Head of caudate nucleus (tissue), 42 donors: ENCODE measurements at regions of chr1 and their contacts with region 1.

Region 1: DNA sequence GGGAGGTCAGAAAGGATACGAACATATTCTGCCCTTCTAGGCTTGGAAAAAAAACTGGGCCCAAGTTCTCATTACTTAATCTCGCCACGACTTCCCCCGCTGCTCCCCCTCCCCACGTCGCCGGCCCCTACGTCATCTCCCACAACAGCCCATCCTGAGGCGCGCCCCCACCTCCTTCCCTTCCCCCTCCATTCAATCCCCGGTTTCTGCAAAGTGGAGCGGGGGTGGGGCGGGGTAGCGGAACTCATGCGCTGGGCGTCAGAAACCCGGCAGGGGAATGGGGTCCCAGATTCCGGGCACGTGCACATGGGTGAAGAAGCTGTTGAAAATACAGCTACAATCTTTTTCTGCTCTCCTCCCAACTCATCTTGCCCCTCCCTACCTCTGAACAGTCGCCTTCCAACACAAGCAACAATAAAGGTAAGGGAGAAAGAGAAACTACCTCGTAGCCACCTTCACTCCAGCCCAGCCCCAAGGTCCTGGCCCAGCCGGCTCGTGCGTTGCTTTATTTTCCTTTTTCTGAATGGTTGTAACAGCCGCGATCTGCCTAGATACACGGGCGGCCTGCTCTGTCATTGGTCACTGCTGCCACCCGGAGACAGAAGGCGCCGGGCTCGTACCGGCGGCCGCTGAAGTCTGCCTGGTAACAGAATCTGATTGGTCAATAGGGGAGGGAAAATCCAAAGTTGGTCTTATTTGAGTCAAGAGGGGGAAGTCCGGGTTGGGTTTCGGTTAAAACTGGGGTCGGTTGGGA is at the start of gene RFX5:
- DNase-seq: peak; percentile 85 to 98 (median 94)

Region 2: GRCh38 chr1:150683914-150684313 is 663.0 kb before region 1 on chr1:
- intact Hi-C with region 1: no loop called
- DNase-seq: no peak

Region 3: DNA sequence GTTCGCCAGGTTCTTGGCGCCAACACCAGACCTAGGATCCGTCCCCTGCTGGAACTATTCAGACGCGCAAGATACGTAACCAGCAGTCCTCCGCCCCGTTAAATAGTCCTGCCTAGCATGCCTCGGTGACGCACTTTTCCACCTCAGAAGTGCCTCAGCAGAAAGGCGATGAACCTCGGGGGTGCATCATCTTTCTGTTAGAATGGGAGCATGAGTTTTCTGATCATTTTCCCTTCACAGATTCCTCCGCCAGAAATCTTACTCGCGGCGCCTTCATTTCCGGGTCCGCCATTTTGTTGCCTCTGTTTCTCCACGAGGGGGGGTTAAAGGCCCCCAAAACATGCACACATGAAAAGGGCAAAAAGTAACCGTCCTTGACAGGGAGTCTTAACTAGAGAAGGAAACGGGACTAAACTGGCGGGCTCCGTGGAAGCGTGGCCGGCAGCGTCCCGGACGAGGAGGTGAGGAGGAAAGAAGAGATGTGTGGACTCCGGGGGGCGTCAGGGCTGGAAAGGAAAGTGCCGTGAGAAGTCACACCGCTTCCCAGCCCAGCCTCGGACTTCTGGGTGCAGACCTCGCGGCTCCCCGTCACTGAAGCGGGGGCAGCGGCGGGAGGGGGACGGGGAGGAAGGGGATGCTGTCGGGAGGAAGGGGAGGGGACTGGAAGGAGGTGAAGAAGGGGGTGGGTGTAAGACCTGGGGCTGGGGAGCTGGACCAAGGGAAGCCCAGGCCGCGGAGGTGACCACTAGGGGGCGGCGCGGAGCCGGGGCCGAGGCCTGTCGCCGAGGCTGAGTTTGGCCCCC is 276.3 kb before region 1 on chr1 and contains the start of gene GABPB2:
- intact Hi-C with region 1: no loop called
- DNase-seq: peak; percentile 81 to 98 (median 92)

Region 4: DNA sequence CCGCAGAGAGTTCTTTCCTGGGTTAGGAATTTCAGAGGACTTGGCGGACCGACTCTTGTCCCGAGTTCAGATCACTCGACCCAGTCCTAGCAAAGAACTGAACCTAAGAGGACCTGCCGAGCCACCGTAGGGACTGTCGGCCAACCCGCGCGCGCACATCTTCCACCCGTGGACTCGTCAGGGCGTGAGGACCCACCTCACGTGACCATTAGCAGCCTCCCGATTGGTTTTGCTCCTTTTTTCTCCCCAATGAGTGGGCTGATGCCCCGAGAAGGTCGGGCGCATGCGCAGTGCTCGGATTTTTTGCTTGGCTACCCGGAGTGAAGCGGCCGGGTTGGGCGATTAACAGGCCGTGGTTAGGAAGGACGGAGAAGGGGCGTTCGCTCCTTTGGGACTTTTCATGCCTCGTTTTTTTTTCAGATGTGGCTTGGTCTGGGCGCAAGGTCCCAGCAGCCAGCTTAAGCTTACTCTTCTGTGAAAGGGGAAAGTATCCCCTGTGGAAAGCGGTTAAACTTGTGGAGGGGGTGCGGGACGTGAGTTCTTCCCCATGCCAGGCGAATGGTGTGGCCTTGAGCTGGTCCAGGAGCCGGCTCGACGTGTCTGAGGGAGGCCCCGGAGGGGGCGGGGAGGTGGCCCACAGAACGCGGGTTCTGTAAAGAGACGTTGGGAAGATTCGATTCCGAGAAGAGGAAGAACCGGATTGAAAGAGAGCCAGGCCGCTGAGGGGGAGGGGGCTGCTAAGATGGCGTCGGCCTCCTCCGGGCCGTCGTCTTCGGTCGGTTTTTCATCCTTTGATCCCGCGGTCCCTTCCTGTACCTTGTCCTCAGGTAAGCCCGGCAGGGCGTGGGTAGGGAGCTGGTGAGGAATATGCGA is 148.5 kb before region 1 on chr1 and contains the start of gene PIP5K1A:
- intact Hi-C with region 1: loop called (anchors 10 kb)
- DNase-seq: peak; percentile 95 to 100 (median 99)

Region 5: DNA sequence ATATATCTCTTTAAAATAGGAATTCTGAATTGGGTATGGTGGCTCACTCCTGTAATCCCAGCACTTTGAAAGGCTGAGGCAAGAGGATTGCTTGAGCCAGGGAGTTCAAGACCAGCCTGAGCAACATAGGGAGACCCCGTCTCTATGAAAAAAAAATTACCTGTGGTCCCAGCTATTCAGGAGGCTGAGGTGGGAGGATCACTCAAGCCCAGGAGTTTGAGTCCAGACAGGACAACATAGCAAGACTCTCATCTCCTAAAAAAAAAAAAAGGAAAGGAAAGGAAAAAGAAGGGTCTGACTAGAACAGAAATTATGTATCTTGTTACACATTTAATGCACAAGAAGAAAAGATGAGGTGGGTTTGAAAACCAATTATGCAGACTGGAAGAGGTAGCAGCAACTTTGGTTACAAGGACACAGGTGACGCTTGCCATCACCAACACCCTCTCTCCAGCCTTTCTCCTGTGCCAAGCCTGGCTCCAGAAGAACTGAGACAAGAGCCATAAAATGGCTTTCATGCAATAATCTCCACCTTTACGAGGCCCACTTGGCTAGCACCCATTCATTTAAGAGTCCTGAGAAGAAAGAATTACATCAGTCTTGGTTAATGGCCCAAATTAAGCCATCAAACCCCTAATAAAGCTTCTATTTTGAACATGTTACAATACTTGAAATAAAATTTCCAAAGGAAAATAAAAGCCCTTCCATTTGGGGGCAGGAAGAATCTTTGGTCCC is 30.4 kb after region 1 on chr1:
- intact Hi-C with region 1: no loop called
- DNase-seq: no peak

Region 6: GRCh38 chr1:151399890-151400495 is 53.0 kb after region 1 on chr1:
- intact Hi-C with region 1: loop called (anchors 10 kb)
- DNase-seq: peak in 8 of 42 donors; percentile 10 to 43 (median 16)